CD14-positive monocyte (primary cell): ENCODE measurements at regions of chr15 and their contacts with region 1.

Region 1: DNA sequence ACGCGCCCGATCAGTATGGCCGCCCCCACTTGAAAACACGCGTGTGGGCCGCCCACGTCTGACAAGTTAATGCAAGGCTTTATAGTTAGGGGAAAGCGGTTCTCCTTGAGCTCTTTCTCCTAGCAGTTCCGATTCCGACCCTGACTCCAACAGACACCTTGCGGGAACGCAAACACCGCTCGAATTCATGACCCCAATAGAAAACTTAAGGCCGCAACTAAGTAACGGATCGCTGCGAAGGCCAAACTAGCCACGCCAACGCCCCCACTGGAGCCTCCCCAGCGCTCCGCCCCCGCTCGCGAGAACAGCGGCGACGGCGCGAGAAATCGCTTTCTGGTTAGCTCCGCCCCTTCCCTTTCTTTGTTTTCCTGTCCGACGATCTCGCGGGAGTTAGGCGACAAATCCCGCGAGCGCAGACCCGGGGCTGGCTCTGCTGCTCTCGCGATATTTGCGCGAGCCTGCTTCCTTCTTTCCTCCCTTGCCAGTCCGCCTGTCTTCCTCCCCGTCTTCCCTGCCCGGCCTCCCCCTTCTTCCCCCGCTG is at the start of gene IREB2:
- DNase-seq: peak; percentile 98 to 99 (median 99)
- H3K4me3 ChIP-seq: peak within 1 kb of the TSS; percentile 74 to 91 (median 86)
- H3K4me3 Mint-ChIP-seq: peak within 1 kb of the TSS; percentile 97 to 98
- H3K27ac ChIP-seq: peak within 1 kb of the TSS; percentile 86 to 89
- H3K27ac Mint-ChIP-seq: peak within 1 kb of the TSS; percentile 86 to 96 (median 92)
- H3K4me1 ChIP-seq: peaks cover 34 to 42% of the 10 kb centered on the region in 2 donors
- H3K4me1 Mint-ChIP-seq: peaks cover 36% of the 10 kb centered on the region
- H3K27me3 ChIP-seq: no peaks in the 10 kb centered on the region
- H3K27me3 Mint-ChIP-seq: no peaks in the 10 kb centered on the region
- CTCF ChIP-seq: no peak
- polyA plus RNA-seq, gene IREB2: 11.7 to 25.5 (median 16.7) TPM

Region 2: GRCh38 chr15:78149068-78149804 is 288.6 kb before region 1 on chr15 and contains the start of gene IDH3A:
- intact Hi-C with region 1: loop called in 1 of 2 experiments (anchors 5 kb)
- DNase-seq: peak; percentile 96 to 98 (median 97)
- H3K4me3 ChIP-seq: peak within 1 kb of the TSS; percentile 73 to 81 (median 78)
- H3K4me3 Mint-ChIP-seq: peak within 1 kb of the TSS; percentile 83 to 96
- H3K27ac ChIP-seq: peak within 1 kb of the TSS in 1 of 2 donors; percentile 91
- H3K27ac Mint-ChIP-seq: peak within 1 kb of the TSS; percentile 90 to 97 (median 92)
- H3K4me1 ChIP-seq: peaks cover 19 to 32% of the 10 kb centered on the region in 2 donors
- H3K4me1 Mint-ChIP-seq: peaks cover 37% of the 10 kb centered on the region
- H3K27me3 ChIP-seq: no peaks in the 10 kb centered on the region
- H3K27me3 Mint-ChIP-seq: peaks cover 0 to 5% (median 2%) of the 10 kb centered on the region in 3 donors
- CTCF ChIP-seq: no peak
- polyA plus RNA-seq, gene IDH3A: 46.5 to 85.0 (median 74.0) TPM

Region 3: DNA sequence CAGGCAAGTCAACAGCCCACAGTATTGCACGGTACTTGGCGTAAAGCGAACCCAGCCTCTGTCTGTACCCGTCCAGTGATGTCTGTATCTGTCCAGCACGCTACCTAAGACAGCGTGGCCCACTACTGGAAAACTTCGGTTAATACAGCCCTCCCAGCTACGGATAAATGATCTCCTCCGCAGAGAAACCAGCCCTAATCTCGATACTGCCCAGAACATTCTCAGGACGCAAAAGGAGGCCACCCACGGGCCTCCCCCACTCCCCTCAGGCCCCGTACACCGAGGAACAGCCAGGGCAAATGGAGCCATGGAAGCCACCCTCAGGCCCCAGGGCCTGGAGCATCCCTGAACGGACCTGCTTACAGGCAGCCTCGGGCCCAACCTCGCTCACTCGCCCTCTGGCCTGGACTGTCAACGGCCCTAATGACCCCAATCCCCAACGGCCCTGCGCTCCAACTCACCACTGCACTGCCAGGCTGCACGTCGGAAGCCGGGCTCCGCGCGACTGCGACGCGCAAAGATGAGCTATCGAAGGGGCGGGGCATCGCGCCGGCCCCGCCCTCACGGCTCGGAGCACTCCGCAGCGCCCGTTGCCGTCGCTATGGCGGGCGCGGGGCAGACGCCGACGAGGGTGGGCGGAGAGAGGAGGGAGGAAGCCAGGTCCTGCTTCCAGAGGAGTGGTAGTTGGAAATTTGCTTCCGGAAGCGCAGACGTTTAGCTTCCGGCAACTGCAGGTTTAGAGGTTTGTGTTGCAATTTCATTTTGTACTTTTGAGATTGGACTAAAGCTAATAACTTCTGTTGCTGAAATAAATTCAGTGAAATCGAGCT is 138.5 kb before region 1 on chr15 and contains the start of gene SKIC8:
- intact Hi-C with region 1: loop called (anchors 5 kb)
- DNase-seq: peak; percentile 89 to 91 (median 90)
- H3K4me3 ChIP-seq: peak within 1 kb of the TSS; percentile 63 to 94 (median 82)
- H3K4me3 Mint-ChIP-seq: peak within 1 kb of the TSS; percentile 94 to 98
- H3K27ac ChIP-seq: peak within 1 kb of the TSS; percentile 89 to 93
- H3K27ac Mint-ChIP-seq: peak within 1 kb of the TSS; percentile 94 to 97 (median 96)
- H3K4me1 ChIP-seq: peaks cover 49 to 54% of the 10 kb centered on the region in 2 donors
- H3K4me1 Mint-ChIP-seq: peaks cover 44% of the 10 kb centered on the region
- H3K27me3 ChIP-seq: no peaks in the 10 kb centered on the region
- H3K27me3 Mint-ChIP-seq: peaks cover 0 to 2% (median 0%) of the 10 kb centered on the region in 3 donors
- CTCF ChIP-seq: no peak
- polyA plus RNA-seq, gene SKIC8: 59.8 to 123 (median 88.0) TPM

Region 4: GRCh38 chr15:78455749-78456148 is 17.9 kb after region 1 on chr15:
- intact Hi-C with region 1: loop called in 1 of 2 experiments (anchors 2 kb)
- DNase-seq: no peak
- H3K4me3 ChIP-seq: no peak overlapping the region
- H3K4me3 Mint-ChIP-seq: no peak overlapping the region
- H3K27ac ChIP-seq: peak overlapping the region in 1 of 2 donors; percentile 65
- H3K27ac Mint-ChIP-seq: peak overlapping the region; percentile 15 to 92 (median 88)
- H3K4me1 ChIP-seq: peaks cover 40 to 48% of the 10 kb centered on the region in 2 donors
- H3K4me1 Mint-ChIP-seq: peaks cover 60% of the 10 kb centered on the region
- H3K27me3 ChIP-seq: no peaks in the 10 kb centered on the region
- H3K27me3 Mint-ChIP-seq: peaks cover 0 to 1% (median 0%) of the 10 kb centered on the region in 3 donors
- CTCF ChIP-seq: no peak

Region 5: DNA sequence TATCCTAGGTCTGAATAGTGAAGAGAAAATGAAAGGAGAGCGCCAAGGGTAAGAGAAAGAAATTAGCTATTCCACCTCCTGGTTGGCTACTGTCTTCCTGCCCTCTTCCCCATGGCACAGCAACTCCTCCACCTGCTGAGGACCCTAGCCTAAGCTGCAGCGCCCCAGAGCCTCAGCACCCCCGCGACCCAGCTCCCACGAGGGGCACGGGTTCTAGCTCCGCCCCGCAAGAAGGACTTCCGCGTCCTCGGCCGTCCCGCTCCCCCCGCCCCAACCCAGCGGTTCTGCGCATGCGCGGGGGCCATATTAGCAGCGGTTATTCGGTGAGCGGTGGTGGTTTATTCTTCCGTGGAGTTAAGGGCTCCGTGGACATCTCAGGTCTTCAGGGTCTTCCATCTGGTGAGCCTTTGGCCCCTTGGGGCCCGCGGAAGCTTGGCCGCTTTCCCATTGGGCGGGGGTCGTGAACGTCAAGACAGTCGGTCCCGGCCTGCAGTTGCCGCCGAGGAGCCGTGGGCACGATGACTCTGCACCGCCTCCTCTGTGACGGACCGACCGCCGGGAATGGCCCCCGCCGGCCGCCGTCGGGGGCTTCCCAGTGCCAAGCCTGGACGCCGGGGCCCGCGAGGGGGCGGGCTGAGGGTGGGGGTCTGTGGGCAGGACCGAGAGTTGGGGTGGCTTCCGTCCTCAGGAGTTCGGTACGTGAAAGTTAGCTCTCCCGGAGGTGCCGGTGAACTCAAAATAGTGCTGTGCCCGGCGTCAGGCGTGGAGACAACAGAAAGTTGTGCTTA is 102.5 kb after region 1 on chr15 and contains the start of gene PSMA4:
- intact Hi-C with region 1: loop called (anchors 5 kb)
- DNase-seq: peak; percentile 83 to 89 (median 84)
- H3K4me3 ChIP-seq: peak within 1 kb of the TSS; percentile 67 to 89 (median 77)
- H3K4me3 Mint-ChIP-seq: peak within 1 kb of the TSS; percentile 94 to 98
- H3K27ac ChIP-seq: peak within 1 kb of the TSS; percentile 94 to 97
- H3K27ac Mint-ChIP-seq: peak within 1 kb of the TSS; percentile 98 to 100 (median 99)
- H3K4me1 ChIP-seq: peaks cover 16 to 21% of the 10 kb centered on the region in 2 donors
- H3K4me1 Mint-ChIP-seq: peaks cover 27% of the 10 kb centered on the region
- H3K27me3 ChIP-seq: no peaks in the 10 kb centered on the region
- H3K27me3 Mint-ChIP-seq: peaks cover 0 to 2% (median 1%) of the 10 kb centered on the region in 3 donors
- CTCF ChIP-seq: no peak
- polyA plus RNA-seq, gene PSMA4: 121 to 421 (median 406) TPM

Region 6: DNA sequence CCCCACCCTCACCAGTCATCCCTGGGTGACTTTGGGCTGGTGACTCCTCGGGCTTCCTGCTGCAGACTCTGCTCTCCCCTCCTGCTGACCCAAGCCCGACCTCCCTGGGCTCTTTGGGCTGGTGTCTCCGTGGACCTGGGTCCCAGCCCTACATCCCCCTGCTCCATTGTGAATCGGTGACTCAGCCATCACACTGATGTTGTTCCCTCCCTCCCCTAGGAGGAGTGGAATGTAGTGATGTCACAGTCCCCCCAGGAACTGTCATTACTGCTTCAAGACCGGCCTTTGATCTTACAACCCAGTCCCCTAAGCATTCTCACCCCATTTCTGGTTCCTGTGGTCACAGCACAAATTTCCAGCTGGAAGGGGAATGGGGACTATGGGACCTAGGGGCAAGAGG is 289.8 kb after region 1 on chr15:
- intact Hi-C with region 1: no loop called
- DNase-seq: no peak
- H3K4me3 ChIP-seq: no peak overlapping the region
- H3K4me3 Mint-ChIP-seq: no peak overlapping the region
- H3K27ac ChIP-seq: no peak overlapping the region
- H3K27ac Mint-ChIP-seq: peak overlapping the region in 1 of 7 donors; percentile 36
- H3K4me1 ChIP-seq: no peaks in the 10 kb centered on the region
- H3K4me1 Mint-ChIP-seq: peaks cover 2% of the 10 kb centered on the region
- H3K27me3 ChIP-seq: no peaks in the 10 kb centered on the region
- H3K27me3 Mint-ChIP-seq: peaks cover 3 to 10% (median 7%) of the 10 kb centered on the region in 3 donors
- CTCF ChIP-seq: no peak